Naive thymus-derived CD4-positive, alpha-beta T cell (primary cell): ENCODE measurements at regions of chr5 and their contacts with region 1.

Region 1: GRCh38 chr5:179836225-179837019 is 15.7 kb downstream of the SQSTM1 start:
- DNase-seq: peak in 7 of 9 donors; percentile 23 to 67 (median 47)
- ATAC-seq: peak; percentile 87
- H3K4me3 ChIP-seq: no peak overlapping the region
- H3K4me3 Mint-ChIP-seq: peak overlapping the region in 9 of 10 donors; percentile 1 to 78 (median 45)
- H3K27ac ChIP-seq: peak overlapping the region; percentile 69
- H3K27ac Mint-ChIP-seq: peak overlapping the region; percentile 77 to 93 (median 88)
- H3K4me1 ChIP-seq: peaks cover 8 to 19% of the 10 kb centered on the region in 2 donors
- H3K4me1 Mint-ChIP-seq: peaks cover 12 to 26% (median 15%) of the 10 kb centered on the region in 7 donors
- H3K27me3 ChIP-seq: no peaks in the 10 kb centered on the region
- H3K27me3 Mint-ChIP-seq: no peaks in the 10 kb centered on the region

Region 2: DNA sequence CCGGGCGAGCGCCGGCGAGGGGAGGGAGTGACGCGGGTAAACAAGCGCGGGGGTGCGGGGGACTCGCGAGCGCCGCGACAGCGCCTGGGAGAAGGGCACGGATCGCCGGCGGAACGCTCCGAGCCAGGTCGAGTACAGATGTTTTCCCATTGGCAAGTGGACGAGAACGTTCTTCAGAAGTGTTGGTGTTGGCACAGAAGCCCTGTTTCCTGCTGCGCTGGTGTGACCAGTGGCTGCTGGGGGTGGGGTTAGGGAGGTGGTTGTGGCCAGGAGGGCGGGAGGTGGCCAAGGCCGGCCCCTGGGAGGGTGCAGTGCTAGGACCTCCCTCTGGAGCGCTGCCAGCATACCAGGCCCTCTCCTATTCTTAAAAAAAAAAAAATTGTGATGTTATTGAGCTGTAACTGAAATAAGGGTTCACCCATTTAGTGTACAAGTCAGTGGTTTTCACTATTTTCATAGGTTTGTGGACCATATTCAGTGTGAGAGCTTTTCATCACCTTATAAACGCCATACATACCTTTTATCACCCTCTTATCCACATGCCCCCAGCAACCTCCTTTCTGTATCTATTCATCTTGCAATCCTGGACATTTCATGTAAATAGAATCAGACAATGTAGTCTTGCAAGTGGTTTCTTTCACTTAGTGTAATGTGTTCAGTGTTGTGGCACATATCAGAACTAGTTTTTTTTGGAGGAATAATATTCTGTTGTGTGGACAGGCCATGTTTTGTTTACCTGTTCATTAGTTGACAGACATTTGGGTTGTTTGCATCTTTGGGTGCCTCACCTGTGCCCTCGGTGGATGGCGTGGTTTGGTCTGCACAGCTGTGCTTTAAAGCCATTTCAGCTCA is 14.6 kb before region 1 on chr5:
- CTCF ChIA-PET with region 1: no interaction called
- POLR2A ChIA-PET with region 1: interaction called, 17 read pairs
- intact Hi-C with region 1: loop called (anchors 1 kb)
- DNase-seq: peak; percentile 72 to 88 (median 85)
- ATAC-seq: peak; percentile 73
- H3K4me3 ChIP-seq: peak overlapping the region; percentile 87
- H3K4me3 Mint-ChIP-seq: peak overlapping the region; percentile 88 to 98 (median 95)
- H3K27ac ChIP-seq: peak overlapping the region; percentile 96
- H3K27ac Mint-ChIP-seq: peak overlapping the region; percentile 79 to 97 (median 94)
- H3K4me1 ChIP-seq: peaks cover 31 to 36% of the 10 kb centered on the region in 2 donors
- H3K4me1 Mint-ChIP-seq: peaks cover 30 to 62% (median 45%) of the 10 kb centered on the region in 7 donors
- H3K27me3 ChIP-seq: no peaks in the 10 kb centered on the region
- H3K27me3 Mint-ChIP-seq: no peaks in the 10 kb centered on the region

Region 3: DNA sequence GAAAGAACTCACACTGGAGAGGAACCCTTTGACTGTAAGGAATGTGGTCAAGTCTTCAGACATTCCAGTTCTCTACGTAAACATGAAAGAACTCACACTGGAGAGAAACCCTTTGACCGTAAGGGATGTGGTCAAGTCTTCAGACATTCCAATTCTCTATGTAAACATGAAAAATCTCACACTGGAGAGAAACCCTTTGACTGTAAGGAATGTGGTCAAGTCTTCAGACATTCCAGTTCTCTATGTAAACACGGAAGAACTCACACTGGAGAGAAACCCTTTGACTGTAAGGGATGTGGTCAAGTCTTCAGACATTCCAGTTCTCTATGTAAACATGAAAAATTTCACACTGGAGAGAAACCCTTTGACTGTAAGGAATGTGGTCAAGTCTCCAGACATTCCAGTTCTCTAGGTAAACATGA is 422.8 kb after region 1 on chr5:
- CTCF ChIA-PET with region 1: no interaction called
- POLR2A ChIA-PET with region 1: no interaction called
- intact Hi-C with region 1: no loop called
- DNase-seq: no peak
- ATAC-seq: no peak
- H3K4me3 ChIP-seq: peak overlapping the region; percentile 6
- H3K4me3 Mint-ChIP-seq: no peak overlapping the region
- H3K27ac ChIP-seq: no peak overlapping the region
- H3K27ac Mint-ChIP-seq: no peak overlapping the region
- H3K4me1 ChIP-seq: no peaks in the 10 kb centered on the region
- H3K4me1 Mint-ChIP-seq: no peaks in the 10 kb centered on the region
- H3K27me3 ChIP-seq: no peaks in the 10 kb centered on the region
- H3K27me3 Mint-ChIP-seq: no peaks in the 10 kb centered on the region

Region 4: GRCh38 chr5:180441563-180441962 is 605.1 kb after region 1 on chr5:
- CTCF ChIA-PET with region 1: no interaction called
- POLR2A ChIA-PET with region 1: no interaction called
- intact Hi-C with region 1: no loop called
- DNase-seq: no peak
- ATAC-seq: no peak
- H3K4me3 ChIP-seq: no peak overlapping the region
- H3K4me3 Mint-ChIP-seq: no peak overlapping the region
- H3K27ac ChIP-seq: no peak overlapping the region
- H3K27ac Mint-ChIP-seq: no peak overlapping the region
- H3K4me1 ChIP-seq: no peaks in the 10 kb centered on the region
- H3K4me1 Mint-ChIP-seq: no peaks in the 10 kb centered on the region
- H3K27me3 ChIP-seq: no peaks in the 10 kb centered on the region
- H3K27me3 Mint-ChIP-seq: peaks cover 0 to 21% (median 9%) of the 10 kb centered on the region in 5 donors